Activated CD4-positive, alpha-beta T cell treated with anti-CD3 and anti-CD28 coated beads for 36 hours (primary cell): ENCODE measurements at regions of chr19 and their contacts with region 1.

Region 1: DNA sequence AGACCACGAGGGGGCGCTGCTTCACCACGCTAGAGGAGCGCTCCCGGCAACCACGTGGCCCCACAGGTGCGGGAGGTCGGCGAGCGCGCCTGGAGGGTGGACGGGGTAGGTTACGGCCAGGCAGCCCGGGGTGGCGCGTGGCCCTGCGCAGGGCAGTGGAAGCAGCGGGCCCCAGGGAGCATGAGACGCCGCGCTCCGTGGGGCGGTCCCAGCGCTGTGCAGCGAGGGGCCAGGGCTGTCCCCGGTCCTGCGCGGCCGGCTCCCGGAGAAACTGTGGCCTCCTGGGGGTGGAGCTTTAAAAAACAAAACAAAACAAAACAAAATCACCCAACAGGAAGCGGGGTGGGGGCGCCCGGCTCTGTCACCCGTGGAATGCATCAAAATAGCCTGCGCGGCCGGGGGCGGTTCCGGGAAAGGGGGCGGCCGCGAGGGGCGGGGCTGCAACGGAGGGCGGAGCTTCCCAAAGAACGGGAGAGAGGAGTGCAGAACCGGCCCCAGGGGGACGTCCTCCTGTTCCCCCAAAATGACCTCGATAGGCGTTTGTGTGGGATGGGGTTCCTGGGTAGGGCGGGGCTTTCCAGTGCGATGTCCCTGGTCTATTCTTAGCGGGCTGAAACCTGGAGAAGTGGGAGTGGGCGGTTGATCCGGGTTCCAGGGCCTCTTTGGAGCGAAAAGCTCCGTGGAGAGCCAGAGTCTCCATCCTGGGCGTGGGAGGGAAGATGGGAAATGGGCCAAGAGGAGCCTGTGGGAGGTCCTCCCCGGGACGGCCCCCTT is 27.3 kb downstream of the NUMBL start:
- DNase-seq: peak; percentile 96
- ATAC-seq: peak; percentile 81
- H3K4me3 Mint-ChIP-seq: peak overlapping the region; percentile 66
- H3K27ac Mint-ChIP-seq: peak overlapping the region; percentile 77
- H3K4me1 Mint-ChIP-seq: peaks cover 19% of the 10 kb centered on the region
- H3K27me3 Mint-ChIP-seq: no peaks in the 10 kb centered on the region

Region 2: GRCh38 chr19:40221858-40222837 is 441.0 kb before region 1 on chr19:
- CTCF ChIA-PET with region 1: no interaction called
- POLR2A ChIA-PET with region 1: no interaction called
- intact Hi-C with region 1: no loop called
- DNase-seq: peak; percentile 84
- ATAC-seq: peak; percentile 85
- H3K4me3 Mint-ChIP-seq: no peak overlapping the region
- H3K27ac Mint-ChIP-seq: no peak overlapping the region
- H3K4me1 Mint-ChIP-seq: peaks cover 13% of the 10 kb centered on the region
- H3K27me3 Mint-ChIP-seq: peaks cover 57% of the 10 kb centered on the region

Region 3: DNA sequence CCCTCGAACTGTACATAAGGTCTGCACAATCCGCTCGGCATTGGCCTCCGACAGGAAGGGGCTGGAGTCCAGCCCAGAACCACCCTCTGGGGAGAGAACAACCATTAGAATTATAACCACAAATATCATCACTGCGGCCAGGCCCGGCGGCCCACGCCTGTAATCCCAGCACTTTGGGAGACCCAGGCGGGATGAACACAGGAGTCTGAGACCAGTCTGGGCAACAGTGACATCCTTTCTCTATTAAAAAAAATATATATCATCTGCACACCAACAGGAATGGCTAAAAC is 42.2 kb after region 1 on chr19:
- CTCF ChIA-PET with region 1: no interaction called
- POLR2A ChIA-PET with region 1: no interaction called
- intact Hi-C with region 1: no loop called
- DNase-seq: no peak
- ATAC-seq: no peak
- H3K4me3 Mint-ChIP-seq: no peak overlapping the region
- H3K27ac Mint-ChIP-seq: no peak overlapping the region
- H3K4me1 Mint-ChIP-seq: no peaks in the 10 kb centered on the region
- H3K27me3 Mint-ChIP-seq: no peaks in the 10 kb centered on the region

Region 4: GRCh38 chr19:40777937-40778705 is 115.0 kb after region 1 on chr19 and contains the start of gene RAB4B:
- CTCF ChIA-PET with region 1: interaction called, 7 read pairs
- POLR2A ChIA-PET with region 1: no interaction called
- intact Hi-C with region 1: loop called in 1 of 2 experiments (anchors 1 kb)
- DNase-seq: peak; percentile 100
- ATAC-seq: peak; percentile 79
- H3K4me3 Mint-ChIP-seq: peak within 1 kb of the TSS; percentile 84
- H3K27ac Mint-ChIP-seq: peak within 1 kb of the TSS; percentile 94
- H3K4me1 Mint-ChIP-seq: peaks cover 38% of the 10 kb centered on the region
- H3K27me3 Mint-ChIP-seq: no peaks in the 10 kb centered on the region
- total RNA-seq, gene RAB4B: 26.4 to 33.7 TPM

Region 5: DNA sequence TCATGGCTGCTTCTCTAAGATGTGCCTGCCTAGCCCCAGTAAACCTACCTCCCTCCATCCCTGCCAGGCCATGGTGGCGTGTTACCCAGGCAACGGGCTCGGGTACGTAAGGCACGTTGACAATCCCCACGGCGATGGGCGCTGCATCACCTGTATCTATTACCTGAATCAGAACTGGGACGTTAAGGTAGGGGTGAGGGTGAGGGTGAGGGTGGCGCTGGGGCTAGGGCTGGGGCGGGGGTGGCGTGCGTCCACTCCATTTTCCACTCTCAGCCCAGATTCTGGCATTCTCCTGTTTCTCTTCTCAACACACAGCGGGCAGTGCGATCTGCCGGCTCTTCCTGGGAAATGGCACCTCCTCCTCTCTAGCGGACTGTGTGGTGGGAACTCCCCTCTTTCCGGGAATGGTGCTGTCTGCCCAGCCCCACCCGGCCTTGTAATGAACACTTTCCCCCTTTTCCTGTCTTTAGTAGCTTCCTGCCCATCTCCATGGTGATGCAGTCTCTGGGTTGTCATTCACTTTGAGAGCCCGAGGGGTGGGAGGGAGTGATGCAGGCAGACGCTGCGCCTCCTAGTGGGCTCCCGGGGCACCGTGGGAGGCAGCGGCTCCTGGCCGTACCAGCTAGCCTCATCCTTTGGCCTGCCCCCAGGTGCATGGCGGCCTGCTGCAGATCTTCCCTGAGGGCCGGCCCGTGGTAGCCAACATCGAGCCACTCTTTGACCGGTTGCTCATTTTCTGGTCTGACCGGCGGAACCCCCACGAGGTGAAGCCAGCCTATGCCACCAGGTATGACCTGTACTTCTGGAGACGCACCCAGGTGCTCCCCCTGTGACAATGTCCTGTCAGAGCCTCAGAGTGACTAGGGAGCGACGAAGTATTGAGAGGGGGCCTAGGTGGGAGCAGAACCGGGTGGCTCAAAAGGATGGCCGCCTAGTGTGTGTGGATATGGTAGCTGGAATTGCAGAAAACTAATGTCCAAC is 143.7 kb after region 1 on chr19:
- CTCF ChIA-PET with region 1: interaction called, 7 read pairs
- POLR2A ChIA-PET with region 1: no interaction called
- intact Hi-C with region 1: loop called in 1 of 2 experiments (anchors 1 kb)
- DNase-seq: peak; percentile 90
- ATAC-seq: peak; percentile 51
- H3K4me3 Mint-ChIP-seq: peak overlapping the region; percentile 55
- H3K27ac Mint-ChIP-seq: peak overlapping the region; percentile 89
- H3K4me1 Mint-ChIP-seq: peaks cover 72% of the 10 kb centered on the region
- H3K27me3 Mint-ChIP-seq: no peaks in the 10 kb centered on the region

Region 6: DNA sequence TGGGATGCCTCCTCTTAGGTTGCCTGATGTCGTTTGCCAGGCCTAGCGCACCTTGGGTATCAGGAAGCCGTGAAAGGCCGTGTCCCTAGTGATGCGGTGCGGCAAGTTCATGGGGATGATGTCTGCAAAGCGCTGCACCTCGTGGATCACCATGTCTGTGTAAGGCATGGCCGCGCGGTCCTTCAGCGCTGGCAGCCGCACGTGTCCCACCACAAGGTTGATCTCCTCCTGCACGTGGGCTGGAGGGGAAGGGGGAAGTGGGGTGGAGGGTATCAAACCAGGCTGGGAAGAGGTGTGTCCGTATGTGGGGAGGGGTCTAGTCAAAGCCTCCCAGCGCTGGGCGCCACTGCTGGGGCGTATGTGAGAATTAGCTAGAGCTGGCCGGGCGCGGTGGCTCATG is 159.1 kb after region 1 on chr19:
- CTCF ChIA-PET with region 1: interaction called, 50 read pairs
- POLR2A ChIA-PET with region 1: no interaction called
- intact Hi-C with region 1: loop called (anchors 1 kb)
- DNase-seq: no peak
- ATAC-seq: no peak
- H3K4me3 Mint-ChIP-seq: no peak overlapping the region
- H3K27ac Mint-ChIP-seq: no peak overlapping the region
- H3K4me1 Mint-ChIP-seq: peaks cover 40% of the 10 kb centered on the region
- H3K27me3 Mint-ChIP-seq: no peaks in the 10 kb centered on the region

Region 7: GRCh38 chr19:41144403-41144802 is 481.3 kb after region 1 on chr19:
- CTCF ChIA-PET with region 1: no interaction called
- POLR2A ChIA-PET with region 1: no interaction called
- intact Hi-C with region 1: loop called (anchors 1 to 10 kb)
- DNase-seq: peak; percentile 94
- ATAC-seq: peak; percentile 92
- H3K4me3 Mint-ChIP-seq: no peak overlapping the region
- H3K27ac Mint-ChIP-seq: no peak overlapping the region
- H3K4me1 Mint-ChIP-seq: no peaks in the 10 kb centered on the region
- H3K27me3 Mint-ChIP-seq: peaks cover 7% of the 10 kb centered on the region